ENCODE measurements at regions of chr3 and their contacts with region 1.

Region 1: DNA sequence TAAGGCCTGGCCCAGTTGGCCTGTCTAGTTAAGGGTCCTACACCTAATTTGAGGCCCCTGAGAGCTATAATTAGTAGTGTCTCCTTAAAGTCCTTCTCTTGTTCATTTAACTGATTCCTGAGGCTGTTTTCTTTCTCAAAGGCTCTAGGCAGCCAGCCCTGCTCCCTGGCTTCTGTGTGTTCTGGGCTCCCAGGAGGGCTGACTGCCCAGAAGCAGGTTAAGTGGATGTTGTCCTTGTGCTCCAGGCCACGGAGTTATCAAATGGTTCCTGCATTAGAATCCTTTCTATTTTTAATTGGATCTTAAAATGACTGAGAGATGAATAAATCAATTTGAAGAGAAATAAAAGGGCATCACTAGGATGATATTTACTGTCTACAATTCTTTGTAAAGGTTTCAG is 140.0 kb downstream of the SNRK start:
- DNase-seq: no peak

Region 2: GRCh38 chr3:42991341-42992315 is 434.8 kb before region 1 on chr3:
- intact Hi-C with region 1: no loop called
- DNase-seq: no peak

Region 3: DNA sequence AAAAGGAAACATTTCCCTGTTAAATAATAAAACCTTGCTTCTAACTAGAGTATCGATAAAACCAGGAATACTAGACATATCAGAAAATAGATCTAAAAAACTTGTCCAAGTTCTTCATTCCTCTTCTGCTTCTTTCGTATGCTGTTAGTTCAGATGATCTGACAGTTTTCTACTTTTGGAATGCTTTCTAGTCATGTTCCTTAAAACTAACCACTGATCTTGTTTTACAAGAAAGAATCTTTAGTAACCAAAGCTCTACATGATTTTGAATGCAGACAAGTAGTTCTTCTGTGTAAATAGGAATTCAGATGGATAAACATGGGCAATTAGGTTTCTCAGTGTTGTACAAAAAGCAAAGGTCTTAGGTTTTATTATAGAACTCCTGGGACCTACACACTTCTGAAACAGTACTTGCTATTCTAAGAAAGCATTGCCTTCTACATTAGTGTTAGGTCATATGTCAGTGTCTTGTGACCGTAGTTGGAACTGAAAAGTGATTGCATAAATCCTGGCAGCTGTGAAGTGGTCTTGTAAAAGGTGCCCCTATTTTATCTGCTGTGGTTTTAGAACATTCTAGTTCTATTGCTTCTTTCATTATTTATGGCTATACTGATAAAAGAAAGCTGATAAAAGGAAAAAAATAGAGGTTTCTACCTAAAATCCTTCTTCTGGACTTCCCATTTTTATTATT is 99.4 kb before region 1 on chr3:
- intact Hi-C with region 1: loop called (anchors 5 kb)
- DNase-seq: no peak

Region 4: DNA sequence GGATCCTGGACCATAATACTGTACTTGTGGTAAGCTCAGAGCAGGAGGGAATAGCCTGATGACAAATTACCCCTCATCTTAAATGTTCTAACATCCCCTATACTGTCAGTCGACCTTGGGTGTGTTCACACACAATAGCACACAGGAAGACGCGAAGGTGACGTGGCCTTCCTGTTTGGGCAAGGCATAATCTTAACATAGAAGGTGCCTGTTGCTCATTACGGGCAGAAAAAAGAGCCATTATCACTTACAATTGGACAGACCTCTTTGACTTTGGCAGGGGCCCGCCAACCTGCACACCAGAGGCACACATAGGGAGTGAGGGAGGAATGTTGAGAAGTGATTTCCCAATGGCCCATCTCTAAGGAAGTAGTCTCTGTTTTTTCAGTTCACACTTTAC is 51.2 kb after region 1 on chr3:
- intact Hi-C with region 1: no loop called
- DNase-seq: no peak